ENCODE measurements at regions of chr11 and their contacts with region 1.

Region 1: DNA sequence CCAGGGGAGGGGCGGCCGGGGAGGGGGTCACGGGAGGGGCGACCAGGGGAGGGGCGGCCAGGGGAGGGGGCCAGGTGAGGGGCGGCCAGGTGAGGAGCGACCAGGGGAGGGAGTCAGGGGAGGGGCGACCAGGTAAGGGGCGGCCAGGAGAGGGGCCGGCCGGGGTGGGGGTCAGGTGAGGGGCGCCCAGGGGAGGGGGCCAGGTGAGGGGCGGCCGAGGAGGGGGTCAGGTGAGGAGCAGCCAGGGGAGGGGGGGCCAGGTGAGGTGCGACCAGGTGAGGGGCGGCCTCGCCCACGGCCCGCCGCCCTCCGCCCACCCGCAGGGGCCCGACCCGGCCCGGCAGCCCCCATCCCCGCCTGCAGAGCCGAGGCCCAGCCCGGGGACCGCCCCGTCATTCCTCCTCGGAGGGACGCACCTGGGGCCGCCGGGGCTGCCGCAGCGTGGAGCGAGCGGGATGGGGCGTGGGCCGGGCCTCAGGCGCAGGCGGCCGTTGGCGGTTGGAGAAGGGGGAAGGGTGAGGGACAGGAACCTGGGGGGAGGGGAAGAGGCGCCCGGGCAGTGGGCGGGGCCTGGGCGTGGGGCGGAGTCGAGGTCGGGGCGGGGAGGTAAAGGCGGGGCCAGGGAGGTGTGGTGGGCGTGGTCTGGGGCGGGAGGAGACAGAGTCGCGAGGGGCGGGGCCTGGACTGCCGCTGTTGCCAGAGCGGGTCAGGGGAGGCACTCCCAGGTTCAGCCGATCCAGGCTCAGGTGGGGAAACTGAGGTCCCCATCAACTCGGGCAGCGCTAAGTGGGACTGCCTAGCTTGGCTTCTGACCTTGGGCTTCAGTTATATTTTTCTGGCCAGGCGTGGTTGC is at the start of gene TESMIN:
- DNase-seq: peak; percentile 83
- H3K4me3 Mint-ChIP-seq: peak within 1 kb of the TSS; percentile 75
- H3K27ac Mint-ChIP-seq: no peak within 1 kb of the TSS
- H3K4me1 Mint-ChIP-seq: no peaks in the 10 kb centered on the region
- H3K27me3 Mint-ChIP-seq: no peaks in the 10 kb centered on the region
- total RNA-seq, gene TESMIN: 1.0 and 2.1 TPM in 2 replicates

Region 2: GRCh38 chr11:68839054-68839865 is 88.0 kb after region 1 on chr11:
- intact Hi-C with region 1: loop called (anchors 1 kb)
- DNase-seq: peak; percentile 85
- H3K4me3 Mint-ChIP-seq: peak overlapping the region; percentile 70
- H3K27ac Mint-ChIP-seq: peak overlapping the region; percentile 73
- H3K4me1 Mint-ChIP-seq: peaks cover 50% of the 10 kb centered on the region
- H3K27me3 Mint-ChIP-seq: peaks cover 2% of the 10 kb centered on the region

Region 3: DNA sequence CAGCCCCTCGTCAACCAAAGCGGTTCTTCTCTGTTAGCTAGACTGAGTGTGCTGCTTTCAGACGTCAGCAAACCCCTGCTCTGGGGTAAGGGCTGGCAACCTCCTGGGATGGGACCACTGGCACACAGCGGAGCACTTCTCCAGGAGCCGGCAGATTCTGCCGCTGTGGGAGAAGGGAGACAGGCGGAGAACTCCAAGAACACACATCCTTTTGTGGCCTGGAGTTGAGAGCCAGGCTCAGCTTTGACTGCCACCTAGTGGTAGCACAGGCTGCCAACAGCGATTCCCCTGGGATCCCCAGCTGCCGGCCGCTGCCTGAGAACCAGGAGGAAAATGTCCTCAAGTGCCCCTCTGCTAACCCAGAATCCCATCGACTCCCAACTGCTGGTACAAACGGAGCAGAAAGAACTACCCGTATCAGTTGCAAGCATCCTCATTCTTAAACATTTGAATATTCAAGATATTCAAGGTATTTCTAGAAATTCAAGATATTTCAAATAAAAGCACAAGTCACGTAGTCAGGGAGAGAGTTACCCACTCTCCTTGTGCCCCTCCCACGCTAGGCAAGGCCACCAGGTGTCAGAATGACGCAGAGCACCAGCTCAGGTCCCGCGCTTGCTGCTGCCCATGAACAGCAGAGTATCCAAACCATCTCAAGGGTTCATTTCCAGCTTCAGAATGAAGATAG is 919.1 kb after region 1 on chr11:
- intact Hi-C with region 1: loop called (anchors 10 kb)
- DNase-seq: peak; percentile 14
- H3K4me3 Mint-ChIP-seq: no peak overlapping the region
- H3K27ac Mint-ChIP-seq: no peak overlapping the region
- H3K4me1 Mint-ChIP-seq: peaks cover 24% of the 10 kb centered on the region
- H3K27me3 Mint-ChIP-seq: no peaks in the 10 kb centered on the region